Dorsolateral prefrontal cortex (tissue), 120 donors: ENCODE measurements at regions of chr6 and their contacts with region 1.

Region 1: GRCh38 chr6:149565527-149566409 is at the start of gene GINM1:
- DNase-seq: peak; percentile 84 to 96 (median 90)
- H3K4me3 ChIP-seq: peak within 1 kb of the TSS; percentile 67 to 100 (median 96)
- H3K27ac ChIP-seq: peak within 1 kb of the TSS; percentile 39 to 97 (median 89)
- H3K27me3 ChIP-seq: no peaks in the 10 kb centered on the region
- CTCF ChIP-seq: peak in 55 of 56 donors; percentile 31 to 73 (median 60)
- total RNA-seq, gene GINM1: 24.7 to 50.8 (median 35.4) TPM

Region 2: GRCh38 chr6:149368065-149368464 is 197.7 kb before region 1 on chr6:
- intact Hi-C with region 1: no loop called
- DNase-seq: no peak
- H3K4me3 ChIP-seq: no peak overlapping the region
- H3K27ac ChIP-seq: no peak overlapping the region
- H3K27me3 ChIP-seq: no peaks in the 10 kb centered on the region
- CTCF ChIP-seq: no peak

Region 3: GRCh38 chr6:149513915-149514314 is 51.9 kb before region 1 on chr6:
- intact Hi-C with region 1: no loop called
- DNase-seq: no peak
- H3K4me3 ChIP-seq: no peak overlapping the region
- H3K27ac ChIP-seq: no peak overlapping the region
- H3K27me3 ChIP-seq: no peaks in the 10 kb centered on the region
- CTCF ChIP-seq: no peak

Region 4: DNA sequence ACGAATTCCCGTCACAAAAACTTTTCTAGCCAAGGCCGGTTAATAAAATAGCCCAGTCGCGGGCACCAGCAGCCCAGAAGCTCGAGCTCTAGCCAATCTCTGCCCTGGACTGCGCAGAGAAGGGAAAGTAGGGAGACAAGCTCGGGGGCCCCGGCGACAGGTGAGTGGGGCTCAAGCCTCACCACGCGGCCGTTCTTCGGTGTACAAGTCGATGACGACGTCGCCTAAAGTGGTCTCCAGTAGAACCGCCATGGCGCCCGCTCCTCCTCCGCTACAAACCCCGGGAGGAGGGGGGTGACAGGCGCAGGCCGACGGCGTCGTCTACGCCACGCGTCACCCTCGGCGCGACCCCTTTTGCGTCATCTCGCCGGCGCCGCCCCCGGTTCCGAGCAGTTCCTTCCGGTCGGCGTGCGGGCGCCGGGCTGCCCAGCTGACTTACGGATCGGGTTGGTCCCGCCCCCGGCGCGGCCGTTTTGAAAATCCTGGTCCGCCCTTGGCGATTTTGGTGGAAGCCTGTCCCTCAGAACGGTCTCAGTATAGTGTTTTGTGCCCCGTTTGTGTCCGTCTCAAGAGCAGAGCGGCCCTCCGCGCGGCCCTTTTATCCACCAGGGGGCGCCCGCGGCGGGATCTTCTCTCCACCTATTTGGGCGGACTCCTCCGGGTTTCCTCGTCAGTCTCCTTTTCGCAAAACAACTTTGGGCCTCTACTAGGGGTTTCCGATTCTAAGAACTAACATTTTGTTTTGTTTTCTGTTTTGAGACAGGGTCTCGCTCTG is 19.8 kb before region 1 on chr6 and contains the start of gene PPIL4:
- intact Hi-C with region 1: loop called (anchors 1 kb)
- DNase-seq: peak; percentile 87 to 97 (median 95)
- H3K4me3 ChIP-seq: peak within 1 kb of the TSS; percentile 70 to 100 (median 96)
- H3K27ac ChIP-seq: peak within 1 kb of the TSS; percentile 70 to 99 (median 92)
- H3K27me3 ChIP-seq: no peaks in the 10 kb centered on the region
- CTCF ChIP-seq: peak; percentile 74 to 98 (median 92)
- total RNA-seq, gene PPIL4: 20.6 to 52.2 (median 37.6) TPM

Region 5: DNA sequence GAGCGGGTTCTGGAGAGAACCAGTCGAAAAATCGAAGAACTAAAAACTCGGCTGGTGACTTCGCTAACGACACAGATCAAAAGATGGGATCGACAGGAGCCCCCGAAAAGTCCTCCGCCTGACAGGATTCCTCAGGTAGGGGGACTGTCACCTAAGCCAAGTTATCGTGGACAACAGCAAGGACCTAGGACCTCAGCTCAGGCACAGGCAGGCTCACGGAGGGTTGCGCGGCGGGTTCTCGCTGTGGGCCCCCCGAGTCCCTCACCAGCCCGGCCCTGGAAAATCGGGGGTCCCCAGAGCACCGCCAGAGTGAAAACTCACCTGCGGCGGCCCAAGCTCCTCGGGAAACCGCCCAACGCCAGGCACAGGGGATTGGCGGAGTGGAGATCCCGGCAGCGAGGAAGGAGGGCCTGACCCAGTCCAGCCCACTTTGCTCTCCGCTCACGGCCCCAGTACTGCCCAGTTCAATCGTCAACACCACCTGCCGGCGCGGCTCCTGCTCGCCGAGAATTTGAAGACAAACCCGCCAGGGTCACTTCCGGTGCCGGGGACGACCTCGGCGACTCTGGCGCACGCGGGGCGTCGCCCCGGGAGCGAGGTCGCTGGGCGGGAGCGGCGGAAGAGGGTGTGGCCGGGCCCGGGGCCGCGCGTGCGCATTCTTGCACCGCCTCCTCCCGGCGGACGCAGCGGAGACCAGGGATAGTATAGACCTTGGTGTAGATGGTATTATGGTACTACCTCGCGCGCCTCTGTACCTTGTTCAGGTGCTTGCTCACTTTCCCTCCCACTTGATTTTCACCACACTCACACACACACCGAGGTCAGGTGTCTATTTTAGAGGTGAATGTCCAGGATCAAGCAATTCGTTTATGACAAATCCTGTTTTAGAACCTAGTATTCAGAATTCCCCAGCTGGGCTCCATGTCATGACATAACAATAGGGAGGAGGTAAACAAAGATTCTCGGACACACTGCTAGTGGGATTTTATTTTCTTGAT is 82.7 kb after region 1 on chr6 and contains the start of gene KATNA1:
- intact Hi-C with region 1: loop called (anchors 1 to 2 kb)
- DNase-seq: peak; percentile 63 to 93 (median 78)
- H3K4me3 ChIP-seq: peak within 1 kb of the TSS; percentile 60 to 99 (median 90)
- H3K27ac ChIP-seq: peak within 1 kb of the TSS in 56 of 59 donors; percentile 4 to 90 (median 76)
- H3K27me3 ChIP-seq: no peaks in the 10 kb centered on the region
- CTCF ChIP-seq: peak in 39 of 56 donors; percentile 5 to 58 (median 35)
- total RNA-seq, gene KATNA1: 4.9 to 16.3 (median 9.9) TPM

Region 6: GRCh38 chr6:149717588-149718458 is 152.1 kb after region 1 on chr6 and contains the start of gene LATS1:
- intact Hi-C with region 1: loop called (anchors 5 kb)
- DNase-seq: peak; percentile 78 to 94 (median 90)
- H3K4me3 ChIP-seq: peak within 1 kb of the TSS; percentile 56 to 100 (median 96)
- H3K27ac ChIP-seq: peak within 1 kb of the TSS; percentile 85 to 100 (median 97)
- H3K27me3 ChIP-seq: no peaks in the 10 kb centered on the region
- CTCF ChIP-seq: peak in 41 of 56 donors; percentile 3 to 60 (median 30)
- total RNA-seq, gene LATS1: 26.8 to 50.8 (median 36.9) TPM

Region 7: GRCh38 chr6:149746147-149746946 is 180.6 kb after region 1 on chr6 and contains the start of gene NUP43:
- intact Hi-C with region 1: loop called in 1 of 2 experiments (anchors 10 kb)
- DNase-seq: peak; percentile 77 to 94 (median 92)
- H3K4me3 ChIP-seq: peak within 1 kb of the TSS; percentile 43 to 100 (median 85)
- H3K27ac ChIP-seq: peak within 1 kb of the TSS in 58 of 59 donors; percentile 18 to 92 (median 80)
- H3K27me3 ChIP-seq: no peaks in the 10 kb centered on the region
- CTCF ChIP-seq: peak; percentile 33 to 83 (median 64)
- total RNA-seq, gene NUP43: 12.9 to 41.8 (median 23.7) TPM

Region 8: DNA sequence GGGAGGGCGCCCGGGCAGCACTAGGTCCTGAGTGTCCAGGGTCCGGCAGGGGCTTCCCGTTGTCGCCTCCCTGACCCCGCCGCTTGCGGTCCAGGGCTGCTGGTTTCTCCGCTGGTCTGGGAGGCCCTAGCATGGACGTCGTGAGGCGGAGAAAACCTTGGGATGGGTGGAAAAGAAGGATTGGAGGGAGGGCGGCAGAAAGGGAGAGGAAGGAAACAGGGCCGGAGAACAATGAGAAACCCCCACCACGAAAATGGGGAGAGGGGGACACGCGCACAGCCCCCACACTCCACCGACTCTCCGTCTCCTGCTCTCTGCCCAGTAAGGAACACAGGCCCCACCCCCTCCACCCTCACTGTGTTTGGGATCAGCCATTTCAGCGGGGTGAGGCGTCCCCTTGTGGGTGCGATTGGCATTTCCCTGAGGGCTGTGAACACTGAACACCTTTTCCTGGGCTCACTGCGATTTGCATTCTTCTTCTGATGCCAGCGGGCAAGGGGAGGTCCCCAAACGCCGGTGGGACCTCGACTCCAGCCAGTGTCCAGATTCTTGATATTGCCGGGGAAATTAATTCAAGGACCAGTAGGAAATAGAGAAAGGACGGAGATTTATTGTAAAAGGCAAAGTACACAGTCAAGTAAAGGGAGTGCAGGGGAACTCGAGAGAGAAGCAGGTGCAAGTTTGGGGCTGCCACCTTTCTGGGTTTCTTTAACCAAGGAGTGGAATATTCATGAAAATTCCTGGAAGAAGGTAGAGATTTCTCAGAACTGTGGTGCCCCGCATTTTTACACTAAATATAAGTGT is 360.4 kb after region 1 on chr6:
- intact Hi-C with region 1: loop called in 1 of 2 experiments (anchors 10 kb)
- DNase-seq: peak; percentile 60 to 89 (median 82)
- H3K4me3 ChIP-seq: peak overlapping the region; percentile 25 to 69 (median 54)
- H3K27ac ChIP-seq: peak overlapping the region in 16 of 59 donors; percentile 6 to 73 (median 40)
- H3K27me3 ChIP-seq: peaks cover 0 to 99% (median 22%) of the 10 kb centered on the region in 45 donors
- CTCF ChIP-seq: peak; percentile 47 to 89 (median 70)

Region 9: DNA sequence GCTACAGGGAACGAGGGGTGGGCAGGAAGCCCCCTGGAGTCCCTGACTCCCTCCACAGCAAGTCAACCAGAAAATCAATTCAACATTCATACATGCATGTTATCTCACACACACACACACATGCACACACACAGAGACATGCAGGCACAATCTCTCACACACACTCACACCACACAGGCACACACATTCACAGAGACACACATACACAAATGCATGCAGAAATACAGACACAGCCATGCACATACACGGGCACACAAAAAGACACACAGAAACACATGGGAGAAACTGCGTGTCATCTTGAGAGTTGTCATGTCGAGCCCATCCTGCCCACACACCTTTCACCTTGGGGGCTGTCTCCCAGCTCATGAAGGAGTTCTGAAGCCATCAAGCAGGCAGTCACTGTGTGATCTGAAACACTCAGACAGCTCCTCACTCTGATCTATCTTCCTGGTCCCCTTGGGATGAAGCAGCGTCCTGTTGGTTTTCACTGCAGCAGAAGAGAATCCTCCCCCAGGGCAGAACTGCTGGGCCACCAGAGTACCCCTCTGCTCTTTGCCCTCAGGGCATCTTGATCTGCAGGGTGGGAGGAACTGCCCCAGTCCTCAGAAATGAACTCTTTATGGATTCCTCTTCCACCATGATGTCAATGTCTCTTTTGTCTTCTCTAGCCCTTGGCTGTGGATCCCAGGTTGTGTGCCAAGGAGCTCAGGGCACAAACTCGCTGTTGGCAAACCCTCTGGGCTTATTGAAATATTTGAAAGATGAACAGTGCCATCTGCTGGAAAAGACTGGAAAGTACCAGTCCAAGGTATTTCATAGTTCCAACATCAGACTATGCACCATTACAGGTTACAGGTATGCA is 450.8 kb after region 1 on chr6:
- intact Hi-C with region 1: loop called in 1 of 2 experiments (anchors 10 kb)
- DNase-seq: peak in 7 of 10 donors; percentile 54 to 82 (median 72)
- H3K4me3 ChIP-seq: no peak overlapping the region
- H3K27ac ChIP-seq: no peak overlapping the region
- H3K27me3 ChIP-seq: peaks cover 2 to 78% (median 57%) of the 10 kb centered on the region in 45 donors
- CTCF ChIP-seq: peak; percentile 60 to 92 (median 82)